ENCODE measurements at regions of chr20 and their contacts with region 1.

Region 1: GRCh38 chr20:58192567-58192966 is 35.9 kb downstream of the ANKRD60 start:
- DNase-seq: peak; percentile 14
- H3K4me3 Mint-ChIP-seq: no peak overlapping the region
- H3K27ac Mint-ChIP-seq: no peak overlapping the region
- H3K4me1 Mint-ChIP-seq: no peaks in the 10 kb centered on the region
- H3K27me3 Mint-ChIP-seq: peaks cover 3% of the 10 kb centered on the region

Region 2: GRCh38 chr20:58209652-58210397 is 17.3 kb after region 1 on chr20:
- intact Hi-C with region 1: loop called (anchors 1 kb)
- DNase-seq: peak; percentile 76
- H3K4me3 Mint-ChIP-seq: no peak overlapping the region
- H3K27ac Mint-ChIP-seq: no peak overlapping the region
- H3K4me1 Mint-ChIP-seq: peaks cover 4% of the 10 kb centered on the region
- H3K27me3 Mint-ChIP-seq: peaks cover 16% of the 10 kb centered on the region